ENCODE measurements at regions of chr14 and their contacts with region 1.

Region 1: DNA sequence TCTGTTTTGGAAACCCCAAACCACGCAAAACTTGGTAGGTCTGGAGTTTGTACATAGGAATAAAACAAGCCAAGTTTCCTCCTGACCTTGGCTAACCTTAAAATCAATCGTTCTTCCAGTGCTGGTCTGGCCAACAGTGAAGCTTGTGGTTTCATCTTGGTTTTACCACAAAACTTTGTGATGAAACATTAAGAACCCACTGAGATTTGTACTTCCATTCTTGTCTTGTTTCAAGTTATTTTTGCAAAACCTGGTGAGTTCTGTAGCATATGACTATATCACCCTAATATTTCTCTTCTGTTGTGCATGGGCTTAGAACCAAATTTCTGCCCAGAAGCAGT is 26.4 kb downstream of the SIX1 start:
- DNase-seq: peak; percentile 32
- H3K4me3 ChIP-seq: no peak overlapping the region
- H3K27ac ChIP-seq: no peak overlapping the region
- H3K27me3 ChIP-seq: no peaks in the 10 kb centered on the region
- CTCF ChIP-seq: no peak

Region 2: DNA sequence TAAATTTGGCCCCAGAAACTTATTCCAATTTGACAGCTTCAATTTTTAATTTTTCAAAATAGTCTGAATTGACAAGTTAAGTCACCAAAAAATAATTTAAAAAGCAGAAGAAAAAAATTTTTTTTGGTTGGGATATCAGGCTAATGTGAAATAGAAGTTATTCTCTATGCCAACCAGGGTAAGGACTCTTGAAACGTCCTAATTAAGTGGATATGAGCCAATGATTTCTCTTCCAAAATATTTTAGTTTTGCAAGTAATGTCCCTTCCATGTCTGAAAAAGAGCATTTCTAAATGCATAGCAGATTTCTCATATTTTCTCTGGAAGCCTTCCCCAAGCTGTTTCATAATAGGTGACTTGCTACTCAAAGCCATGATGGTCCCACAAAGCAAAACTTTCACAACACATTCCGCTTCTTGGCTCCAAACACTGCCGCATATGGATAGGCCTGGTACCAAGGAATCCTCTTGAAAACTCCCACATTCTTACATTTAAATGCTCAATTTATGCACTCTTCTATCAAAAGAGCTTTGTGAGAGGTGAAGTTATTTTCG is 48.9 kb before region 1 on chr14:
- CTCF ChIA-PET with region 1: no interaction called
- POLR2A ChIA-PET with region 1: no interaction called
- DNase-seq: no peak
- H3K4me3 ChIP-seq: no peak overlapping the region
- H3K27ac ChIP-seq: no peak overlapping the region
- H3K27me3 ChIP-seq: no peaks in the 10 kb centered on the region
- CTCF ChIP-seq: no peak

Region 3: GRCh38 chr14:60637479-60638315 is 14.8 kb after region 1 on chr14:
- CTCF ChIA-PET with region 1: interaction called, 4 read pairs
- POLR2A ChIA-PET with region 1: interaction called, 12 read pairs
- DNase-seq: no peak
- H3K4me3 ChIP-seq: peak overlapping the region; percentile 14
- H3K27ac ChIP-seq: peak overlapping the region; percentile 59
- H3K27me3 ChIP-seq: no peaks in the 10 kb centered on the region
- CTCF ChIP-seq: no peak

Region 4: DNA sequence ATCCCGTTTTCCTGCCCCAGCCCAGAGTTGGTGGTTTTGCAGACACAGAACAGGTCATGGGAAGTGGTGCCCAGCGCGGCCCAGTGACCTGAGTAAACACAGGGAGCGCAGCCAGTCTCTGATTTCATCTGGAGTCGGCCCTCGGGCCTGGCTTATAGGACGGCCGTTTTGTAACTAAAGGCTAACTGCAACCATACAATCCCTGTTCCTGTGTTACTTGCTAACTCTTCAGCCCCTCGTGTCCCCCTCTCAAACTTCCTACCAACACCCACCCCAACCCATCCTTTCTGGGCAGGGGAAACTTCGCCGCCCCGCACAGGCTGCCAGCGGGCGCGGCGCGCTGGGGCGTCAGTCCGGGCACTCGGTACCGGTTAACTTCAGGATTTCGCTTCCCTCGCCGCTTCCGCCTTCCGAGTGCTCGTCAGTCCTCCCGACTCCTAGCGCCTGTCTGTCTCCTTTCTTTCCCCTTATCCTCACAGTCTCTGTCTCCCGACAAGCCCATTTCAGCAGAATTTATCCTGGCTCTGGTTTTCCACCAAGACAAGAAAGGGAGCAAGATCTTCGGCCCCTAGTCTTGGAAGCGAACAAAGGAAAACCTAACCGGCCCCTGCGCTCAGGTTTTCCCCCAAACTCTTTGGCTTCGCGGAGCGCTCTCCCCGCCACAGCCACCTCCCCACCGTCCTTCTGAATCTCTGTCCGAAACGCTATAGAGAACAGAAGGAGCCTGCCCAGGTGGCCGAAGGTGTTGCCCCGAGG is 24.4 kb after region 1 on chr14:
- CTCF ChIA-PET with region 1: interaction called, 8 read pairs
- POLR2A ChIA-PET with region 1: interaction called, 12 read pairs
- DNase-seq: no peak
- H3K4me3 ChIP-seq: peak overlapping the region; percentile 88
- H3K27ac ChIP-seq: peak overlapping the region; percentile 73
- H3K27me3 ChIP-seq: no peaks in the 10 kb centered on the region
- CTCF ChIP-seq: no peak

Region 5: GRCh38 chr14:61025251-61026223 is 402.6 kb after region 1 on chr14:
- CTCF ChIA-PET with region 1: interaction called, 11 read pairs
- POLR2A ChIA-PET with region 1: no interaction called
- DNase-seq: peak; percentile 57
- H3K4me3 ChIP-seq: peak overlapping the region; percentile 23
- H3K27ac ChIP-seq: no peak overlapping the region
- H3K27me3 ChIP-seq: no peaks in the 10 kb centered on the region
- CTCF ChIP-seq: peak; percentile 93

Region 6: DNA sequence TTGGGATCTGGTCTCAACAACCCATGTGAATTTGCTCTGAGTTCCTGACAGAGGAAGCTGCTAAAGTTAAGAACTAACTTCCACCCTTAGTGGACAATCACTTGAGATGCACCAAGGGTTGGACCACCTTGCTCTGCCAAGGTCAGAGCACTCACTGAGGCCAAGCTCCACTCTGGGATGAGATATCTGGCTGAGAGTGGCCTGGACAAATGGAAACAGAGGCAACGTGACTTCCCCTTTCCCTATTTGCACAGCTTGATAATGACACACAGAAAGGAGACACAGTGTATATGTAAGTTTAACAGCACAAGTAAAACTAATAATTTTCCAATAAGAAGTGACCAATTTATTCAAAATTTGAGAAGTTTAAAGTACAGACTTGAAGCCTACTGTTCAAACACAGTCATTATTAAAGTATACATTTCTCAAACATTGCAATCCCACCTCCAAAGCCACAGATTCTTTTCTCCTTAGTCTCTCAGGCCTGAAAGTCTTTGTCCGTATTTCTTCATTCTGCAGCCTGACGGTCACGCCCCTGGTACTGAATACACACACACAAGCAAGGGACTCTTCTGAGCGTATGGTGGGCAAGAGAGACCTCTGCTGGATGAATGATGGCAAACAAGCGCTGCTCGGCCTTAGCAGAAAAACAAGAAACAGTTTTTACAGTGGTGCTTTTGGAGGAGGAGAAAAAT is 629.6 kb after region 1 on chr14:
- CTCF ChIA-PET with region 1: interaction called, 21 read pairs
- POLR2A ChIA-PET with region 1: interaction called, 3 read pairs
- DNase-seq: peak; percentile 98
- H3K4me3 ChIP-seq: no peak overlapping the region
- H3K27ac ChIP-seq: peak overlapping the region; percentile 94
- H3K27me3 ChIP-seq: no peaks in the 10 kb centered on the region
- CTCF ChIP-seq: peak; percentile 96